ENCODE measurements at regions of chr2 and their contacts with region 1.

Region 1: DNA sequence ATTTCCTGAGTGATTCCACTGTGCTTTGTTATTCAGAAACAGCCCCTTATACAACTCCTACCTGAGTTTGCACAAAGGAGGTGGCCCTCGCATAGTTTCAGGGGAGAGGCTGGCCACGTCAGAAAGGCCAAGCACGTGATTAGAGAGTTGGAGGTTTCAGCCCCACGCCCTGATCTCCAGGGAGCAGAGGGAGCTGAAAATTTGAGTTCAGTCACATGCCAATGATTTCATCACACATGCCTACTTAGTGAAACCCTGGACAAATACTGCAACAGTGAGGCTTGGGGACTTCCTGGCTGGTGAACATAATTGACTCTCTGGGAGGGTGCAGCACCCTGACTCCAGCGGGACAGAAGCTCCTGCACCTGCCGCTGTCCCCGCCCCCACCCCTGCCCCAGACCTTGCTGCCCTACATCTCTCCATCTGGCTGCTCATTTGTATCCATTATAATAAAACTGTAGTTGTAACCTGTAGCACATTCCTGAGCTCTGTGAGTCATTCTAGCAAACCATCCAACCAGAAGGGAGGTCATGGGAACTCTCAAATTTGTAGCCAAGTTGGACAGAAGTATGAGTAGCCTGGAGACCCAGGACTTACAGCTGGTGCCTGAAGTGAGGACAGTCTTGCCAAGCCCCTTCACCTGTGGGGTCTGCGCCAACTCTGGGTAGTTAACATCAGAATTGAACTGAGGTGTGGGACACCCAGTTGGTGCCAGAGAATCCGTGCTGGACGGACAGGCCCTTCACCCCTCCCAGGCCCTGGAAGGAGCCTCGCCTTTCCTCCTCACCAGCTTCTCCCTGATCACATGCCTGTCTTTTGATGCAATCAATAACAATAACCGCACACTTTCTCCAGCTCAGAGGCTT is 224.3 kb downstream of the ANAPC1 start:
- DNase-seq: peak; percentile 90 to 99
- H3K4me3 ChIP-seq: peak overlapping the region; percentile 35; the same call in 1 of the 2 replicates
- H3K27ac ChIP-seq: peak overlapping the region; percentile 100
- H3K4me1 ChIP-seq: peaks cover 49% of the 10 kb centered on the region
- H3K27me3 ChIP-seq: no peaks in the 10 kb centered on the region
- CTCF ChIP-seq: no peak

Region 2: DNA sequence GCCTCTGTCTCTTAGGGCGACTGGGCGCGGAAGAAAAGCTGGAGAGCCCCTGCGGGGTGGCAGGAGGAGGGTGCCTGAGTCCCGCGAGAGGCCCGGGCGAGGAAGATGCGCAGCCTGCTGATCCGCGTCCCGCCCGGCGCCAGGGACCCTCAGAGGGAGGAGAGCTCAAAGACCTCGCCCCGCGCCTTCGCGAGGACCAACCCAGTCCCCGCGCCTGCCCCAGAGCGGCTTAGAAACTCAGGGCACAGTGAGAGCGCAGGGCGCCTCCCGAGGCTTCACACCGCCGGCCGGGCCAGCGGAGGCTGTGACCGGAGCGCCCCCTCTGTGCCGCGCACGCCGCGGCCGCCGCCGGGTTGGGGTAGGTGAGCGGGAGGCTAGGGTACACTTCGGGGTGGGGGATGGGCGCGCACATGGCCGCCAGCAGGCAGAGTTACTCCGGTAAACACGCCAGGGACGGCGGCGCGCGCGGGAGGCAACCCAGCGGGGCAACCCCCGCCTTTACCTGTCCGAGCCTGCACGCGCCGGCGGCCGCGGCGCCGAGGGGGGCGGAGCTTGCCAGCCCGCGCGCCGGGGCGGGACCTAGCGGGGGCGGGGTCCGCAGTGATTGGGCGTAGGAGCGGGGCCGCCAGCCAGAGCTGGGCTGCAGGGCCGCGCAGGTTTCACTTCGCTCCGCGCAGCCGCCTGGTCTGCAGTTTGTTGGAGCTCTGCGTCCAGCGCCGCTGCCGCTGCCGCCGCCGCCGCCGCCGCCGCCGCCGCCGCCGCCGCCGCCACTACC is 539.2 kb before region 1 on chr2 and contains the start of gene BCL2L11:
- CTCF ChIA-PET with region 1: no interaction called
- POLR2A ChIA-PET with region 1: no interaction called
- intact Hi-C with region 1: no loop called
- DNase-seq: peak; percentile 81 to 98
- H3K4me3 ChIP-seq: peak within 1 kb of the TSS; percentile 92
- H3K27ac ChIP-seq: peak within 1 kb of the TSS; percentile 87
- H3K4me1 ChIP-seq: peaks cover 13% of the 10 kb centered on the region
- H3K27me3 ChIP-seq: no peaks in the 10 kb centered on the region
- CTCF ChIP-seq: peak; percentile 59; the same call in 1 of the 2 replicates
- total RNA-seq, gene BCL2L11: 12.4 and 17.0 TPM in 2 replicates

Region 3: GRCh38 chr2:111617299-111618225 is 42.1 kb before region 1 on chr2:
- CTCF ChIA-PET with region 1: no interaction called
- POLR2A ChIA-PET with region 1: interaction called, 35 read pairs
- intact Hi-C with region 1: loop called (anchors 2 kb)
- DNase-seq: peak; percentile 63 to 96
- H3K4me3 ChIP-seq: no peak overlapping the region
- H3K27ac ChIP-seq: peak overlapping the region; percentile 84
- H3K4me1 ChIP-seq: peaks cover 41% of the 10 kb centered on the region
- H3K27me3 ChIP-seq: no peaks in the 10 kb centered on the region
- CTCF ChIP-seq: peak; percentile 14; the same call in 1 of the 2 replicates

Region 4: DNA sequence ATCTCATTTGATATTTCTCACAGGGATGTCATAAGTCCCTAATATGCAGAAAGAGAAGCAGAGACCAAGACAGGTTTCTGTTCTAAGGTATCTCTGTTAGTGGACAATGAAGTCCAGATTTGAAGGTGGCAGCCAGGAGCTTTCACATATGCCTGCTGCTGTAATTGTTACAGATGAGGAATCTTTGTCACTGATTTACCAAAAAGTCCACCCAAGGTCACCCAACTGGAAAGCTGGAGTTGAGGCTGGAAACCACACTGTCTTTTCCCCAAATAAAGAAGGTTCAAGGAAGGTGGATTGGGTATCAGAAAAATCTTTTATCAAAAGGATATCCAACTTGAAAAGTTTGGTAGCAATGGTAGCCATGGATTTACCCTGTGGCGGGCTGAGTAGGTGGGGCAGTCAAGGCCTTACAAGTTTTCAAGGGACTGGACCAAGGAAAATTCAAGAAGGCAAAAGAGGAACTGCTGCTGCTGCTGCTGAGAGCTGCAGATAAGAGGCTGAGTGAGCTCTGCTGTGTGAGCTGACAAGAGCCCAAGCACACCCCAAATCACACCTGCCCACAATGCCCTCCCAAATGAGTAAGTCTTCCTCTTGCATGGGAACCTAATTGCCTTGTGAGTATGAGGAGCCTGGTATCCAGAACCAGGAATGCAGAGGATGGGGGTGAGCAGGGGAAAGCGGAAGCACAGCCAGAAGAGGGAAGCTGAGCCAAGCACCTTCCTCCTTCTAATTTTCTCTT is 16.9 kb before region 1 on chr2:
- CTCF ChIA-PET with region 1: no interaction called
- POLR2A ChIA-PET with region 1: no interaction called
- intact Hi-C with region 1: loop called (anchors 1 kb)
- DNase-seq: no peak
- H3K4me3 ChIP-seq: no peak overlapping the region
- H3K27ac ChIP-seq: no peak overlapping the region
- H3K4me1 ChIP-seq: peaks cover 14% of the 10 kb centered on the region
- H3K27me3 ChIP-seq: no peaks in the 10 kb centered on the region
- CTCF ChIP-seq: no peak

Region 5: GRCh38 chr2:111698743-111699554 is 39.3 kb after region 1 on chr2:
- CTCF ChIA-PET with region 1: no interaction called
- POLR2A ChIA-PET with region 1: interaction called, 3 read pairs
- intact Hi-C with region 1: loop called (anchors 1 kb)
- DNase-seq: peak; percentile 87 to 99
- H3K4me3 ChIP-seq: peak overlapping the region; percentile 20; the same call in 1 of the 2 replicates
- H3K27ac ChIP-seq: peak overlapping the region; percentile 88
- H3K4me1 ChIP-seq: peaks cover 56% of the 10 kb centered on the region
- H3K27me3 ChIP-seq: no peaks in the 10 kb centered on the region
- CTCF ChIP-seq: peak; percentile 40; the same call in 1 of the 2 replicates

Region 6: DNA sequence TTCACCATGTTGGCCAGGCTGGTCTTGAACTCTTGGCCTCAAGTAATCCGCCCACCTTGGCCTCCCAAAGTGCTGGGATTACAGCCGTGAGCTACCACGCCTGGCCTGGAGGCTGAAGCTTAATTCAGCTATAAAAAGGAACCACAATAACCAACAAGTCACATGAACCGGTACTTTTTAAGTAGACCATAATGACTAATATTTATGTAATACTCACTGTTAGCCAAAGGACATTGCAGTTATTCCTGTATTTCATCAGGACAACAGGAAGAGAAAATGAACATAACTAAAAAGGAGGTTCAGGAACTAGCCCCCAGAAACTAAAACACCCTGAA is 346.4 kb after region 1 on chr2:
- CTCF ChIA-PET with region 1: no interaction called
- POLR2A ChIA-PET with region 1: no interaction called
- intact Hi-C with region 1: no loop called
- DNase-seq: peak in 1 of 2 experiments; percentile 78
- H3K4me3 ChIP-seq: no peak overlapping the region
- H3K27ac ChIP-seq: peak overlapping the region; percentile 76
- H3K4me1 ChIP-seq: peaks cover 33% of the 10 kb centered on the region
- H3K27me3 ChIP-seq: no peaks in the 10 kb centered on the region
- CTCF ChIP-seq: no peak

Region 7: GRCh38 chr2:112024896-112025491 is 365.3 kb after region 1 on chr2:
- CTCF ChIA-PET with region 1: no interaction called
- POLR2A ChIA-PET with region 1: interaction called, 26 read pairs
- intact Hi-C with region 1: no loop called
- DNase-seq: no peak
- H3K4me3 ChIP-seq: no peak overlapping the region
- H3K27ac ChIP-seq: no peak overlapping the region
- H3K4me1 ChIP-seq: peaks cover 27% of the 10 kb centered on the region
- H3K27me3 ChIP-seq: no peaks in the 10 kb centered on the region
- CTCF ChIP-seq: no peak